ENCODE measurements at regions of chr4 and their contacts with region 1.

Region 1: DNA sequence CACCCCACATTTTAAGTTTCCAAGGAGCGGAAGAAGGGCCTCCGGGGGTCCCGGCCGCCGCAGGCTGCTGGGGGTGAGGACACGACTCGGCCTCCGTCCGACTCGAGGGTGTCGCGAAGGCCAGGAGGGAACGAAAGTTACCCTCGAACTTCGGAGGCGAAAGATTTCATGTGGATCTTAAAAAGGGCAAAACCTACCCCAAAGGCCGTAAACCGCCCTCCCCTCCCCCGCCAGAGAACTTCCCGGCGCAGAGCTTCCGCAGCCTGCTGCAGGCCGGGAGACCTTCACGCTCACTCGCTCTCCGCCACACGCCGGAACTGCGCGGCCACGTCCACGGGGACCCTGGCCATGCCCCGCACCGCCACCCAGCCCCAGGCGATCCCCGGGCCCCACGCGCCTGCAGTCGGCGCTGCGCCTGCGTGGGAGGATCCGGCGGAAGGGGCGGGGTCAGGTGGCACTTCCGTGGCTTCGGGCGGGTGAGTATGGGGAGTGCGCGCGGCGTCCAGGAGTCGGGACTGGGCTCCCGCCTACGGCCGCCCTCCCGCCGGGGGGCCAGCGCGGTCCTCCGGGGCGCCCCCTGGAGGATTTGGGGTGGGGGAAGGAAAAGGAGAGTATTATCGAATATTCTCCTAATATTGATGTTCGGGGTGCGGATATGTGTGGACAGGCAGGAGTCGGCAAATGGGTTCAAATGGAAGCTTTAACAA is at the start of gene MMAA:
- DNase-seq: peak; percentile 95
- H3K4me3 Mint-ChIP-seq: peak within 1 kb of the TSS; percentile 93
- H3K27ac Mint-ChIP-seq: peak within 1 kb of the TSS; percentile 99
- H3K4me1 Mint-ChIP-seq: peaks cover 47% of the 10 kb centered on the region
- H3K27me3 Mint-ChIP-seq: no peaks in the 10 kb centered on the region
- total RNA-seq, gene MMAA: 15.2 to 19.6 TPM

Region 2: DNA sequence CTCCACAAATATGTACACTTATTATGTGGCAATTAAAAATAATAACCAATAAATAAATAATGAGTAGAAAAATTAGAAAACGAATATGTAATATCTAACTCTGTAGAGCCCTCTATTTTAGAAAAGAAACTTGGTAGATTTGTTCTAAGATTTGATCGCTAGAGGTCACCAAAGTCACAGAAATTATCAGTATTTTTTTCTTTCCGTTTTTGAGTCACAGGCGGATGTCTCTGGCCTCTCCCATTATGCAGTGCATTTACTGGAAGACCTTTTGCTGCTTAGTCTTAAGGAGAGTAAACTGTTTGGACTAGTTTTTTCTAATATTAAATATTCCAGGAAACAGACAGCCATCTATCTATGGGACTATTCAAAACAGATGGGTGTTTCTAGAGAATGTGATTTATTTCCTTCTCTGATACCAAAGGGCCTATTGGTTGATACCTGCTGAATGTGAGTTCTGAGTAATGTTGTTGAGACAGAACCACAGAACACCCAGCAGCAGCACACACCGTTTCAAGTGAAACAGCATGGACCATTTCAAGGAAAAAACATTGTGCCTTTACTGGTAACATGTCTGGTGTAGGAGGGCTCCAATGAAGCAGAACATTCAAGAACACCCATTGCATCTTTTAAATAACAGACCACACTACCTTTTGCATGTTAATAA is 1444.6 kb before region 1 on chr4:
- CTCF ChIA-PET with region 1: no interaction called
- intact Hi-C with region 1: loop called (anchors 2 kb)
- DNase-seq: peak; percentile 32
- H3K4me3 Mint-ChIP-seq: no peak overlapping the region
- H3K27ac Mint-ChIP-seq: peak overlapping the region; percentile 24
- H3K4me1 Mint-ChIP-seq: peaks cover 15% of the 10 kb centered on the region
- H3K27me3 Mint-ChIP-seq: peaks cover 4% of the 10 kb centered on the region

Region 3: DNA sequence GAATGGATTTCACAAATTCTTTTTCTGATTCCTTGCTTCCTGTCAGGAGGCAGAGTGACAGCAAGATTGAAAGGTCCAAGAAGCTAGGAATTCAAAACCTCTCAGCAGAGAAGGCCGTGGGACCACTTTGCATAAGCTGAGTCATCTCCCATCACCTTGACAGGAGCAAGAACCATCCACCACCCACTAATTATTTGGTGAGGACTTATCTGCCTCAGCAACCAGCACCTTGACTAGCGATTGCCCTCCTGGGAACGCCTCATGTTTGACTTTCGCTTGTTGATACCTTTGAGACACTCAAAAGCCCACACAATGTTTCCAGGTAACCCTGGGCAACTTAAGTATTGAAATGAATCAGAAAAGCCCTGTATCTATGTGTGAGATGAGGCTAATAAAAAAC is 1245.0 kb before region 1 on chr4:
- CTCF ChIA-PET with region 1: no interaction called
- intact Hi-C with region 1: no loop called
- DNase-seq: no peak
- H3K4me3 Mint-ChIP-seq: no peak overlapping the region
- H3K27ac Mint-ChIP-seq: no peak overlapping the region
- H3K4me1 Mint-ChIP-seq: no peaks in the 10 kb centered on the region
- H3K27me3 Mint-ChIP-seq: no peaks in the 10 kb centered on the region

Region 4: GRCh38 chr4:145216535-145216934 is 402.6 kb before region 1 on chr4:
- CTCF ChIA-PET with region 1: interaction called, 8 read pairs
- intact Hi-C with region 1: loop called (anchors 5 kb)
- DNase-seq: no peak
- H3K4me3 Mint-ChIP-seq: no peak overlapping the region
- H3K27ac Mint-ChIP-seq: no peak overlapping the region
- H3K4me1 Mint-ChIP-seq: no peaks in the 10 kb centered on the region
- H3K27me3 Mint-ChIP-seq: peaks cover 4% of the 10 kb centered on the region

Region 5: DNA sequence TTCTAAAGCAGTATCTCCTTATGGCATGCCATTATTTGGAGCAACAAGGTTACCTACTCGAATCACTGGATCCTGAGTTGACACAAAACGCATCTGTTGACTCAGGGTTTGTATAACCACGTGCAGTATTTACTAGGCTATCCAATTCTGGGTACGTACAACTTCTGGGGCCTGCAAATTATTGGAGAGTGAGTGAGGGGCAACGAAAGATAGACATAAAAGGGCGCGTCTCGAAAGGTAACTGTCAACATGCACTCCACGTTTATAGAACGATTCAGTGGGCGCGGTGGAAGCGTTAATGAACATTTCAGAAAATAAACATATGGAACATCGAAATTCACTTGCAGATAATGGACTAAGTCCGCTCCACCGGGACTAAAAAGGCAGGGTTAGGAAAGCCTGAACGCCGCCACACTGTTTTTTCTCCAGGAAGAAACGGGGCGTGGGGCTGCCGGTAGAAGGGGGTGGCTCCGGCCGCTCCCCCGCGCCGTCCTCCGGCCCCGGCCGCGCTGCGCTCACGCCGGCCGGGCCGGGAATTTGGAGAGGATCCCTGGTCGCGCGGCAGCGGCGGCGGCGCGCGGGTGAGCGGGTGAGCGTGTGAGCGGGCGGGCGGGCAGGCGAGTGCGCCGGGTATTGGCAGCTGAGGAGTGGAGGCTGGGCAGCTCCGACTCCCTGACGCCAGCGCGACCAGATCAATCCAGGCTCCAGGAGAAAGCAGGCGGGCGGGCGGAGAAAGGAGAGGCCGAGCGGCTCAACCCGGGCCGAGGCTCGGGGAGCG is 137.7 kb before region 1 on chr4 and contains the start of gene SMAD1:
- CTCF ChIA-PET with region 1: interaction called, 4 read pairs
- intact Hi-C with region 1: loop called (anchors 2 kb)
- DNase-seq: peak; percentile 29
- H3K4me3 Mint-ChIP-seq: peak within 1 kb of the TSS; percentile 73
- H3K27ac Mint-ChIP-seq: no peak within 1 kb of the TSS
- H3K4me1 Mint-ChIP-seq: peaks cover 5% of the 10 kb centered on the region
- H3K27me3 Mint-ChIP-seq: peaks cover 31% of the 10 kb centered on the region
- total RNA-seq, gene SMAD1: 0.57 to 0.79 TPM

Region 6: DNA sequence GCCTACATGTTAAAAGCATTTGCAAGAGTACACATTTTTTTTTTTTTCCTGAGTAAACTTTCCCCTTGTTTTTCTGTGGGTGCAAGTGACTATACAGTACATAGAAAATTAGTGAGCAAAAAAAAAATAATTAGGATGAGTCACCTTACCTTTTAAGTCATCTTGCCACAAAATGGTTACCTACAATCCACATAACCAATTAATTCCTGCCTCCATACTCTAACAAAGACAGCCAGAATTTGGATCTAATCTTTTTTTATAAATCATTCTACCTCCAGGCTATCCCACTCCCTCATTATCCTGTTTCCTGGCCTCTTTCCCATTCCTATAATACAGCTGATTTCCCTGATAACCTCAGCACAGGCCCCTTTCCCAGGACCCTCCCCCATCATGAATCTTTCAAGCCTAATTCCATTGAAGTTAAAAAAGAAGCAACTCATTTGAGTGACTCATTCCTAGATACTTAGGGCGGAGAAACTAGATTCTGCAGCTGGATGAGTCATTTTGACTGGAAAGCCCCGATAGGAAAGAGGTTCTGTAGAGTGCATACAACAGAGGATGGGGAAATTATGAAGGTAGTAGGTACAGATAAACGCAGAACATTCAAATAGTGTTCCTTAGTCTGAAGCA is 189.1 kb after region 1 on chr4:
- CTCF ChIA-PET with region 1: interaction called, 4 read pairs
- intact Hi-C with region 1: loop called (anchors 1 kb)
- DNase-seq: peak; percentile 74
- H3K4me3 Mint-ChIP-seq: peak overlapping the region; percentile 46
- H3K27ac Mint-ChIP-seq: peak overlapping the region; percentile 91
- H3K4me1 Mint-ChIP-seq: peaks cover 44% of the 10 kb centered on the region
- H3K27me3 Mint-ChIP-seq: no peaks in the 10 kb centered on the region

Region 7: GRCh38 chr4:146243141-146243882 is 624.2 kb after region 1 on chr4:
- CTCF ChIA-PET with region 1: no interaction called
- intact Hi-C with region 1: loop called (anchors 1 kb)
- DNase-seq: peak; percentile 71
- H3K4me3 Mint-ChIP-seq: peak overlapping the region; percentile 63
- H3K27ac Mint-ChIP-seq: peak overlapping the region; percentile 77
- H3K4me1 Mint-ChIP-seq: peaks cover 35% of the 10 kb centered on the region
- H3K27me3 Mint-ChIP-seq: peaks cover 3% of the 10 kb centered on the region